Activated naive CD4-positive, alpha-beta T cell treated with anti-CD3 and anti-CD28 coated beads for 36 hours (primary cell): ENCODE measurements at regions of chr2 and their contacts with region 1.

Region 1: DNA sequence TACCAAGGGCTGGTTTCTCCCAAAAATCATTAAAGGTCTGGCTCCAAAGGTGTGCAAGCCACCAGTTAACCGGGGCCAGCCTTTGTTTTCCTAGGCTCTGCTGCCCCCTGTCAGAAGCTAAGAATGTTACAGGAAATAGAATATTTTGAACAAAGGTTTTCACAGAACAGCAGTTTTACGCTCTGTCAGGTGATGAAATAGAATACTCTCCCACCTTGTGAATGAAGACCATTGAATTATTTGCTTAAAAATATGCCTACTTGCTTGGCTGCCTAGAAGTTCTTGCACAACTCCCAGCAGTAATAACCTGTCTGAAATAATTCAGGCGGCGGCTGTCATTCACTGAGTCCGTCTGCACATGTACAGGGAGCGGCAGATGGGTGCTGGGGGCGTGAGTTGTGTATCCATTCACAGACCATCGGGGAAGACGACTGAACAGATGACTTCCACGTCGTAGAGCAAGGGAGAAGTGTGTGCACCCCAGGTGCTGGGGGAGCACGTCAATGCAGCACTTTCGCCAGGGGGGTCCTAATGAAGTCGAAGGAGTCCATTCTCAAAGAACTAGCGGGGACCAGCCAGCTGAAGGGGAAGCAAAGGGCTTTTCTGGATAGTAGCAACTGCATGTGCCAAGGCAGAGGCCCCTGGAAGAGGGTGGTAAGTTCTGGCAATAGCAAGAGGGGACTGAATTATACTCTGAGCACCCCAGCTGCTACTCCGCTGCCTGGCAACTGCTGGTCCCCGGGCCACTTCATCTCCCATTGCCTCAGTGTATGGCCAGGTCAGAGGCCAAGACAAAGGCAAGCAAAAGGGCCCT is 56.1 kb downstream of the SF3B1 start:
- DNase-seq: peak; percentile 78
- H3K4me3 Mint-ChIP-seq: peak overlapping the region; percentile 22
- H3K27ac Mint-ChIP-seq: no peak overlapping the region
- H3K4me1 Mint-ChIP-seq: peaks cover 15% of the 10 kb centered on the region
- H3K27me3 Mint-ChIP-seq: peaks cover 5% of the 10 kb centered on the region

Region 2: DNA sequence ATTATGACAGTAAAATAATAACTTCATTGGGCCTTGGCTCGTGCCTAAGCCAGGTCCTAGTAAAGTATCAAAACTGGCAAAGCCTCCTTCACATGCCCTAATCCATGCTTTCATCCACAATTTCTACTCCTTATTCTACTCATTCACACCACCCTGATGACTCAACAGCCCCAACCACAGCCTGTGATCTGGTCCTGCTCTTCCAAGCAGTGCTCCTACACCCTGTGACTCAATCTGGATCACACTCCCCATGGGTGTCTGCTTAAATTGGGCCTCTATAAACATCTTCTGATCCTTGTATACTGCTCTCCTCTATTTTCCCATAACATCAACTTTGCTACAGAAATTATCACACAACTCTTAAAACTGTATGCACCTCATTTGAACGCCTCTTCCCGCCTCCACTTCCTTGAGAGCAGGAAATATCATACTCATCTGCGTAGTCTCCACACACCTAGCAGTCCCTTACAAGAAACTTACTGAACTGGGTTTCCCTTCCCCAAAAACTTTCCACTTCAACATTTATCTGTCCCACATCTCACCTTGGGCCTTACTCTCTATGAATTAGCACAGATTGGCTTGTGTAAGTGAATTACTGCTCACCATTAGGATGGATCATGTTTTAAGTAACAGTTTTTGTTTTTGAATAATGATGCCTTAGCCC is 595.1 kb before region 1 on chr2:
- CTCF ChIA-PET with region 1: no interaction called
- intact Hi-C with region 1: loop called (anchors 10 kb)
- DNase-seq: peak; percentile 74
- H3K4me3 Mint-ChIP-seq: no peak overlapping the region
- H3K27ac Mint-ChIP-seq: peak overlapping the region; percentile 79
- H3K4me1 Mint-ChIP-seq: peaks cover 17% of the 10 kb centered on the region
- H3K27me3 Mint-ChIP-seq: no peaks in the 10 kb centered on the region

Region 3: DNA sequence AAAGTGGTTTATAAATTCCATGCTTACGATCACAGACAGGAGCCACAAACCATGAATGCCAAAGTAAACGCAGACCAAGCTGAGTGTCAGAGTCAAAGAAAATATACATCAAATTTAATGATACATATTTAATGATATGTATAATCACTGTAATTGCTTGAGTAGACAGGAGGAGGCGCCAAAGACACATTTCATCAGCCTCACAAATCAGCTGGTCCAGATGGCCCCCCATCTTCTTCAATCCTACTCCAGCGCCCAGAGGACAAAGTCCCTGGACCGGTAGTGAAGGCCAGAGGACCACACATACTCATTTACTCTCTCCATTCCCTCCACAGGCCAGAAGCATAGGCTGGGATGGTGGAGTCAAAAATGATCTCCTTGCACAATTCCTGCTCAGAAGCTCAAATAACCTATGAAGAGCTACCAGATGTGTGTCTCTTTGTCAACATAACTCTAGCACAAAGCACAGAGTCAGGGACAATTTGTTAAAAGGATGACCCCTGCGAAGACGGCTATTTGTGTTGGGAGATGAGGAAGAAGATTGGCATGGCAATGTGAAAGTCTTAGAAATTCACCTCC is 302.9 kb before region 1 on chr2:
- CTCF ChIA-PET with region 1: interaction called, 3 read pairs
- intact Hi-C with region 1: loop called (anchors 1 kb)
- DNase-seq: peak; percentile 35
- H3K4me3 Mint-ChIP-seq: no peak overlapping the region
- H3K27ac Mint-ChIP-seq: no peak overlapping the region
- H3K4me1 Mint-ChIP-seq: peaks cover 44% of the 10 kb centered on the region
- H3K27me3 Mint-ChIP-seq: no peaks in the 10 kb centered on the region

Region 4: DNA sequence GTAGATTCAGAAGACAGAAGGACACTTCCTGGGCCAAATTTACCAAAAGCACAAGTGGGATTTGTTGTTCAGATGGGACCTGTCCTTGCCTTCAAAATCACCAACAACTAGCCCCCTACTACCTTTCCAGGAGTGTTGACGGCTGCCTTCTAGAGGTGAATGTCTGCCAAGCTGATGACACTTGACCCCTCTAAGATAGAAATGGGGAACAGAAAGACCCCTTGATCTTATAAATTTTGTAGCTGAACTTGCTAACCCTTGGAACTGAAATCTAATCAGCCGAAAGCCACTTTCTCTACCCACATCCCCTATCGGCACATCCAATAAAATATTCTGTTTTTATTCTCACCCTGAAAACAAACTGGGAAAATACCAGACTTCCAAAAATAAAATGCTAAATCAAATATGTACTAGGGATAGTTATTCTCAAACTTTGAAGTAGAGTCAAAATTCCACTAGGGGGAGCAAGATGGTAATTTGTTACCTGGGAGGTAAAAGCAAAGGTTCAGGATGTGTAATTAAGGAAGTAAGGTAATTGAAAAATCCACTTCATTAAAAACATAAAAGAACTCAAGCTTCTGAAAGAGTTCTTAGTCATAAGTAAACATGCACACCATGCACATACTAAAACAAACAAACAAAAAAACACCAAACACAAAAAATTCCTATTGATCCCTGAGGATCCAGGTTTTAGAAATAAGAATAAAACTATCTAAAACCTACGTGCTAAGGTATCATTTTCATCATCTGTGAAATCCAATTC is 187.3 kb before region 1 on chr2:
- CTCF ChIA-PET with region 1: interaction called, 7 read pairs
- intact Hi-C with region 1: loop called (anchors 1 kb)
- DNase-seq: no peak
- H3K4me3 Mint-ChIP-seq: peak overlapping the region; percentile 19
- H3K27ac Mint-ChIP-seq: peak overlapping the region; percentile 85
- H3K4me1 Mint-ChIP-seq: peaks cover 74% of the 10 kb centered on the region
- H3K27me3 Mint-ChIP-seq: no peaks in the 10 kb centered on the region

Region 5: GRCh38 chr2:197255543-197255942 is 123.2 kb before region 1 on chr2:
- CTCF ChIA-PET with region 1: no interaction called
- intact Hi-C with region 1: loop called (anchors 5 kb)
- DNase-seq: peak; percentile 87
- H3K4me3 Mint-ChIP-seq: peak overlapping the region; percentile 75
- H3K27ac Mint-ChIP-seq: peak overlapping the region; percentile 97
- H3K4me1 Mint-ChIP-seq: peaks cover 75% of the 10 kb centered on the region
- H3K27me3 Mint-ChIP-seq: no peaks in the 10 kb centered on the region

Region 6: GRCh38 chr2:197777823-197778407 is 399.2 kb after region 1 on chr2:
- CTCF ChIA-PET with region 1: no interaction called
- intact Hi-C with region 1: loop called (anchors 5 kb)
- DNase-seq: peak; percentile 52
- H3K4me3 Mint-ChIP-seq: no peak overlapping the region
- H3K27ac Mint-ChIP-seq: no peak overlapping the region
- H3K4me1 Mint-ChIP-seq: no peaks in the 10 kb centered on the region
- H3K27me3 Mint-ChIP-seq: peaks cover 5% of the 10 kb centered on the region